Mammary epithelial cell (primary cell): ENCODE measurements at regions of chr2 and their contacts with region 1.

Region 1: DNA sequence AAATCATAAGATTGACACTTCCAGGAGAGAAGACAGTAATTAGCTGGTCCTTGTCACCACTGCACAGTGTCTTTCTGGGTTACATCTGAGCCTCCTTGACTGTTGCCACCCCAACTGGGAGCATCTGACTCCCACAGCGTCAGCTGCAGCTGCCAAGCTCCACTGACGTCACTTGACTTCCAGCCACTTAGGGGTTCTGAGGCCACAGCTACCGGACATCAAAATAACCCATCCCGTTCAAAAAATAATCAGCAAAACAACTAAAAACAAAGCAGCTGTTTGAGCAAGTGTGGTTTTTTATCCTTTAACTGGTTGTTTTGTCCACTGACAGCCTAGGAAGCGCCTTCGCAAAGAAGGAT is 206.5 kb upstream of the AGAP1 start:
- DNase-seq: no peak
- H3K4me3 ChIP-seq: no peak overlapping the region
- H3K27ac ChIP-seq: no peak overlapping the region
- H3K4me1 ChIP-seq: no peaks in the 10 kb centered on the region
- H3K27me3 ChIP-seq: no peaks in the 10 kb centered on the region
- CTCF ChIP-seq: no peak

Region 2: DNA sequence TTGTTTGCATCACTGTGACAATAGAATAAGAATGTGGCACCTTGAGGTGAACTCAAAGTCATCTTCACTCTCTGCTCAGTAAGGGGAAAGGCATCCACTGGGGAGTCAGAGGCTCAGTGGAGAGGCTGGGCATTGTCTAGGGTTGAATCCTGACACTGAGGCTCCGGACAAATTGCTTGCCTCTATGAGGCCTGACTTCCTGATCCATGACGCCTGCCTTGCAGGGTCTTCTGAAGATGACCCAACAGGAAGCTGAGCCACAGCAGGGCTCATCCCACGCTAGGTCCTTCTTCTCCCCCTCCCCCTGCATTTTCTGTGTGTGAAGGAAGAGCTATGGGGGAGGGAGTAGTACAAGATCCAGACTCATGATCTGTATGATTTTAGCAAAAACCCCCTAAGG is 70.5 kb before region 1 on chr2:
- CTCF ChIA-PET with region 1: no interaction called
- dilution Hi-C with region 1: loop called (anchors 5 kb)
- in situ Hi-C with region 1: no loop called
- intact Hi-C with region 1: no loop called
- DNase-seq: no peak
- H3K4me3 ChIP-seq: no peak overlapping the region
- H3K27ac ChIP-seq: no peak overlapping the region
- H3K4me1 ChIP-seq: no peaks in the 10 kb centered on the region
- H3K27me3 ChIP-seq: peaks cover 7% of the 10 kb centered on the region
- CTCF ChIP-seq: no peak

Region 3: GRCh38 chr2:235358981-235359471 is 71.7 kb after region 1 on chr2:
- CTCF ChIA-PET with region 1: no interaction called
- dilution Hi-C with region 1: loop called (anchors 5 kb)
- in situ Hi-C with region 1: no loop called
- intact Hi-C with region 1: no loop called
- DNase-seq: peak; percentile 2
- H3K4me3 ChIP-seq: no peak overlapping the region
- H3K27ac ChIP-seq: no peak overlapping the region
- H3K4me1 ChIP-seq: no peaks in the 10 kb centered on the region
- H3K27me3 ChIP-seq: no peaks in the 10 kb centered on the region
- CTCF ChIP-seq: no peak